ACHN (cell line): ENCODE measurements at regions of chr16 and their contacts with region 1.

Region 1: DNA sequence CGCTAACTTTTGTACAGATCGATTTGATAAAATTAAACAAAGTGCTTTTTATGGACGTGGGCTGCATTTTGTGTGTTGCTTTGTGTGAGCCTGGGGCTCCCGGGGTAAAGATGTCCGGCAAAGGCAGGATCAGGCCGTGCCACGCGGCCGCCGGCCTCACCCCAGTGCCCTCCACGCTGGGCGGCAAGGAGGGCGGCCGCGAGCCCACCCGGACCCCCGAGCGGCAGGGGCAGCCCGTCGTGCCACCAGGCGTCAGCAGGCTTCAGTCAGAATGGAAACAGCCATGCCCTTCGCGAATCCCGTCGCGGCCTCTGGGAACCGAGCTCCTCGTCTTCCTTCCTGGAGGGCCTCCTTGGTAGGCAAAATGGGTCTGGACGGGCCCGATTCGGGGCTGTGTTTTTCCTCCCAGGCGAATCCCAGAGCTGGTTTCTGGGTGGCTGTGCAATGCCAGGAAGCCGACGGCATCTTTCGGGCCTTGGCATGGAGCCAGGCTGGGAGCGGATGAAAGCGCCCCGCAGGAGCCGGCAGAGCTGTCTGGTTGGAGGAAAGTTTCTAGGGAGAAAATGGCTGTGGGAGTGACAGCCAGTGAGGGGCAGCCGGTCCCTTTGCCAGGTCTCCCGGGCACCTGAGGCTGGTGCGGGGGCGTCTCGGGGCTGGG is 5.5 kb downstream of the SOX8 start:
- DNase-seq: no peak

Region 2: DNA sequence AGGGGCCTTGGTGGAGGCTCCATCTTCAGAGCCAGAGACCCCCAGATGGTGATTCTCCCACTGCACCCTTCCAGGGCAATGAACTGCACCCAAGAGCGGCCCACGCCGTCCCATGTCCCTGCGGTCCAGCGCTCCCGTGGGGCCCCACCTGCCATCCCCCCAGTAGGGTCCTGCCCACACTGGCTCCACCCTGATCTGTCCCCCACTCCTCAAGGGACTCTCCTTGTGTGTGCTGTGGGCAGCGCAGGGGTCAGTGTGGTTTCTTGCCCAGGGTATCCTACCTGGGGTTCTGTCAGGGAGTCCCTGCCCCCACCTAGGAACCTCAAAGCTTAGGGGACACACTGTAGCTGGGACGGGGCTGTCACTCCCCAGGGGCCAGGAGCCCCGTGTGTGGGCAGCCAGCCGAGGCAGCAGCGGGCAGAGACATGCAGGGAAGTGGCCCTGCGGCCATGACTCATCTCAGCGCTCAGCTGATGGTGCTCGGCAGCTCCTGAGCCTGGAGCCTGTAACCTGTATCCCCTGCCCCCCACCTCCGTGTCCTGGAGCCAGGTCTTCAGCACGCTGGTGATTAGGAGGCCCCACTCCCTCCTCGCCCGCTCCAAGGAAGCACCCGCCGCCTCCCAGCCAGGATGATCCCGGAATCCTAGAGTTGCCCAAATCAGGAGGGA is 49.8 kb after region 1 on chr16:
- in situ Hi-C with region 1: loop called (anchors 5 kb)
- DNase-seq: peak; percentile 75